GM12878 (cell line): ENCODE measurements at regions of chr1 and their contacts with region 1.

Region 1: GRCh38 chr1:185821612-185822385 is 87.6 kb downstream of the HMCN1 start:
- DNase-seq: no peak
- ATAC-seq: peak; percentile 47
- H3K4me3 ChIP-seq: no peak overlapping the region
- H3K27ac ChIP-seq: no peak overlapping the region
- H3K4me1 ChIP-seq: no peaks in the 10 kb centered on the region
- H3K27me3 ChIP-seq: no peaks in the 10 kb centered on the region
- CTCF ChIP-seq: no peak; a peak in 1 of 6 replicates
- EP300 ChIP-seq: no peak
- POLR2A ChIP-seq: no peak
- RAD21 ChIP-seq: no peak

Region 2: GRCh38 chr1:185690527-185690926 is 131.3 kb before region 1 on chr1:
- CTCF ChIA-PET with region 1: no interaction called
- POLR2A ChIA-PET with region 1: no interaction called
- RAD21 ChIA-PET with region 1: no interaction called
- SMC1A ChIA-PET with region 1: no interaction called
- in situ Hi-C with region 1: no loop called
- intact Hi-C with region 1: no loop called
- DNase-seq: no peak
- ATAC-seq: no peak
- H3K4me3 ChIP-seq: no peak overlapping the region
- H3K27ac ChIP-seq: no peak overlapping the region
- H3K4me1 ChIP-seq: no peaks in the 10 kb centered on the region
- H3K27me3 ChIP-seq: no peaks in the 10 kb centered on the region
- CTCF ChIP-seq: no peak
- EP300 ChIP-seq: no peak
- POLR2A ChIP-seq: no peak
- RAD21 ChIP-seq: no peak

Region 3: GRCh38 chr1:185701650-185702049 is 120.1 kb before region 1 on chr1:
- CTCF ChIA-PET with region 1: no interaction called
- POLR2A ChIA-PET with region 1: no interaction called
- RAD21 ChIA-PET with region 1: no interaction called
- SMC1A ChIA-PET with region 1: no interaction called
- in situ Hi-C with region 1: no loop called
- intact Hi-C with region 1: no loop called
- DNase-seq: no peak
- ATAC-seq: no peak
- H3K4me3 ChIP-seq: no peak overlapping the region
- H3K27ac ChIP-seq: no peak overlapping the region
- H3K4me1 ChIP-seq: no peaks in the 10 kb centered on the region
- H3K27me3 ChIP-seq: no peaks in the 10 kb centered on the region
- CTCF ChIP-seq: no peak
- EP300 ChIP-seq: no peak
- POLR2A ChIP-seq: no peak
- RAD21 ChIP-seq: no peak

Region 4: DNA sequence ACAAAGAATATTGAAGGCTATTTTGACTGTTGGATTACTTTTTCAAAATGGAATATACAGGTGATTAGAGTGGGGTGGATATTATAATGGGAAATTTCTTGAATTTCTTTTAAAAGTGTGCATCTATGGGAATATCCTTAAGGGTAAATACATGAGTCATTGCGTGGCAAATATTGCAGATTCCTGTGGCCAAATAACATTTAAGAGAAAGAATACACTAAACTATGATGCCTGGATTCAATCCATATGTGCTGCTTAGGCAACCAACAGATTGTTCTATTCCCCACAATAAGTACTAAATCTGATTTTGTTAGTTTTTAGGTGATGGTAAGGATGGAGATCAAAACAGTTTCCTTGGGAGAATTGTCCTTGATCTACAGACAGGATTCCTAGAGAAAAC is 31.9 kb after region 1 on chr1:
- CTCF ChIA-PET with region 1: no interaction called
- POLR2A ChIA-PET with region 1: no interaction called
- RAD21 ChIA-PET with region 1: no interaction called
- SMC1A ChIA-PET with region 1: no interaction called
- in situ Hi-C with region 1: no loop called
- intact Hi-C with region 1: no loop called
- DNase-seq: no peak
- ATAC-seq: no peak
- H3K4me3 ChIP-seq: no peak overlapping the region
- H3K27ac ChIP-seq: no peak overlapping the region
- H3K4me1 ChIP-seq: no peaks in the 10 kb centered on the region
- H3K27me3 ChIP-seq: no peaks in the 10 kb centered on the region
- CTCF ChIP-seq: no peak
- EP300 ChIP-seq: no peak
- POLR2A ChIP-seq: no peak
- RAD21 ChIP-seq: no peak

Region 5: DNA sequence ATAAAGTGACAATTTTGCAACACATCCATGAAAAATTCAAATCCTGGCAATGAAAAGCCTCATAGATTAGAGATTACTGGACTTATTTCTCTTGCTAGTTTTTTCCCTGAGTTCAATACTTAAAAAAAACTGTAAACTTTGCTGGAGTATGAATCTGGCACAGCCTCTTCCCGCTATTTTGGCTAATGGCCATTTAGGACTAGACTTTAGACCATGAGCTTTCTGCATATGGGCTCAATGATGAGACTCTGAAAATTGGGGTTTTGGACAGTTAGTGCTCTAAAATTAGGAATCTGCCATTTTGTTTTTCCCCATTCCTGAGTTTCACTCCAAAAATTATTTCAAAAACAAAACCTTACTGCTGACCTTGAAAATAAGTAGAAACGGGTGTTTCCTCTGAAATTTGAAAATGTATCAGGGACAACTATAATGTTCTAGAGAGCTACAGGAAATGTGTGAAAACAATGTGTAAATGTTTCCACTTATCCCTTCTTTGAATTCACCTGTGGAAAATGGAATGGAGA is 49.9 kb after region 1 on chr1:
- CTCF ChIA-PET with region 1: no interaction called
- POLR2A ChIA-PET with region 1: no interaction called
- RAD21 ChIA-PET with region 1: no interaction called
- SMC1A ChIA-PET with region 1: no interaction called
- in situ Hi-C with region 1: no loop called
- intact Hi-C with region 1: loop called (anchors 5 kb)
- DNase-seq: no peak
- ATAC-seq: no peak
- H3K4me3 ChIP-seq: no peak overlapping the region
- H3K27ac ChIP-seq: no peak overlapping the region
- H3K4me1 ChIP-seq: no peaks in the 10 kb centered on the region
- H3K27me3 ChIP-seq: no peaks in the 10 kb centered on the region
- CTCF ChIP-seq: no peak
- EP300 ChIP-seq: no peak
- POLR2A ChIP-seq: no peak
- RAD21 ChIP-seq: no peak